ENCODE measurements at regions of chr12 and their contacts with region 1.

Region 1: GRCh38 chr12:113152835-113153814 is 3.6 kb downstream of the CFAP73 start:
- DNase-seq: no peak
- ATAC-seq: peak; percentile 89
- H3K4me3 ChIP-seq: peak overlapping the region; percentile 59; the same call in 1 of the 2 replicates
- H3K27ac ChIP-seq: no peak overlapping the region
- H3K4me1 ChIP-seq: peaks cover 15% of the 10 kb centered on the region
- H3K27me3 ChIP-seq: peaks cover 7 to 8% of the 10 kb centered on the region in 2 experiments; a peak in 2 of 4 replicates
- CTCF ChIP-seq: peak; percentile 45 to 77 (median 53); a peak in 5 of 6 replicates
- EP300 ChIP-seq: no peak
- POLR2A ChIP-seq: no peak
- RAD21 ChIP-seq: peak; percentile 59

Region 2: GRCh38 chr12:113103756-113104450 is 49.2 kb before region 1 on chr12:
- CTCF ChIA-PET with region 1: interaction called, 10 read pairs
- POLR2A ChIA-PET with region 1: interaction called, 3 read pairs
- RAD21 ChIA-PET with region 1: interaction called, 6 read pairs
- SMC1A ChIA-PET with region 1: interaction called, 9 read pairs
- in situ Hi-C with region 1: no loop called
- intact Hi-C with region 1: loop called (anchors 5 kb)
- DNase-seq: no peak
- ATAC-seq: peak; percentile 39; the same call in 2 of the 3 replicates
- H3K4me3 ChIP-seq: peak overlapping the region; percentile 5; the same call in 1 of the 2 replicates
- H3K27ac ChIP-seq: no peak overlapping the region
- H3K4me1 ChIP-seq: peaks cover 10% of the 10 kb centered on the region; the same call in 1 of the 2 replicates
- H3K27me3 ChIP-seq: no peaks in the 10 kb centered on the region
- CTCF ChIP-seq: no peak
- EP300 ChIP-seq: no peak
- POLR2A ChIP-seq: no peak
- RAD21 ChIP-seq: no peak

Region 3: GRCh38 chr12:113109872-113110599 is 43.1 kb before region 1 on chr12:
- CTCF ChIA-PET with region 1: interaction called, 6 read pairs
- POLR2A ChIA-PET with region 1: interaction called, 3 read pairs
- RAD21 ChIA-PET with region 1: no interaction called
- SMC1A ChIA-PET with region 1: no interaction called
- in situ Hi-C with region 1: no loop called
- intact Hi-C with region 1: loop called (anchors 5 kb)
- DNase-seq: no peak
- ATAC-seq: peak; percentile 33
- H3K4me3 ChIP-seq: no peak overlapping the region
- H3K27ac ChIP-seq: no peak overlapping the region
- H3K4me1 ChIP-seq: no peaks in the 10 kb centered on the region
- H3K27me3 ChIP-seq: no peaks in the 10 kb centered on the region; a peak in 2 of 4 replicates
- CTCF ChIP-seq: no peak
- EP300 ChIP-seq: no peak
- POLR2A ChIP-seq: no peak
- RAD21 ChIP-seq: no peak

Region 4: GRCh38 chr12:113135178-113136127 is 17.7 kb before region 1 on chr12 and contains the start of gene RASAL1:
- CTCF ChIA-PET with region 1: interaction called, 10 read pairs
- POLR2A ChIA-PET with region 1: interaction called, 3 read pairs
- RAD21 ChIA-PET with region 1: interaction called, 7 read pairs
- SMC1A ChIA-PET with region 1: interaction called, 6 read pairs
- in situ Hi-C with region 1: no loop called
- intact Hi-C with region 1: no loop called
- DNase-seq: no peak
- ATAC-seq: peak; percentile 91
- H3K4me3 ChIP-seq: no peak within 1 kb of the TSS
- H3K27ac ChIP-seq: no peak within 1 kb of the TSS
- H3K4me1 ChIP-seq: peaks cover under 1% of the 10 kb centered on the region; the same call in 1 of the 2 replicates
- H3K27me3 ChIP-seq: no peaks in the 10 kb centered on the region; a peak in 2 of 4 replicates
- CTCF ChIP-seq: peak; percentile 41 to 69 (median 53)
- EP300 ChIP-seq: no peak
- POLR2A ChIP-seq: no peak
- RAD21 ChIP-seq: no peak
- polyA plus RNA-seq, gene RASAL1: not detected